ENCODE measurements at regions of chr1 and their contacts with region 1.

Region 1: GRCh38 chr1:225474986-225475820 is 47.4 kb upstream of the LBR start:
- ATAC-seq: peak; percentile 81 to 92 (median 89)
- H3K4me3 ChIP-seq: no peak overlapping the region
- H3K27ac ChIP-seq: no peak overlapping the region
- H3K4me1 ChIP-seq: peaks cover 7 to 8% of the 10 kb centered on the region in 2 donors

Region 2: DNA sequence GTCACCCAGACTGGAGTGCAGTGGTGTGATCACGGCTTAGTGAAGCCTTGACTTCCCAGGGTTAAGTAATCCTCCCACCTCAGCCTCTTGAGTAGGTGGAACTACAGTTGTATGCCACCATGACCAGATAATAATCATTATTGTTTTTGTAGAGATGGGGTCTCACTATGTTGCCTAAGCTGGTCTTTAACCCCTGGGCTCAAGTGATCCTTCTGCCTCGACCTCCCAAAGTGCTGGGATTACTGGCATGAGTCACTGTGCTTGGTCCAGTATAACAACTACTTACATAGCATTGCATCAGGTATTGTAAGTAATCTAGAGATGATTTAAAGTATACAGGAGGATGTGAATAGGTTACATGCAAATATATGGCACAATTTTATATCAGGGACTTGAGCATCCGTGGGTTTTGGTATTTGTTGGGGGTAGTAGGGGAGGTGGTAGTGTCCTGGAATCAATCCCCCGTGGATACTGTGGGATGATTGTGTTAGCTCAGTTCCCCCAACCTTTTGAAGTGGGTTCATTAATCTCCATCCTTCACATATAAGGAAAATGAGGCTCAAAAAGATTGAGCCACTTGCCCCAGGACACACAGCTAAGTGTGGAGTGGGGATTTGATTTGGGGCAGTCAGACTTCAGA is 920.5 kb before region 1 on chr1:
- in situ Hi-C with region 1: no loop called
- ATAC-seq: peak in 3 of 8 experiments; percentile 29 to 74 (median 39)
- H3K4me3 ChIP-seq: no peak overlapping the region
- H3K27ac ChIP-seq: no peak overlapping the region
- H3K4me1 ChIP-seq: peaks cover 5 to 8% of the 10 kb centered on the region in 2 donors

Region 3: GRCh38 chr1:225766967-225767633 is 291.9 kb after region 1 on chr1:
- in situ Hi-C with region 1: loop called in 8 of 9 experiments (anchors 5 to 25 kb)
- ATAC-seq: peak in 3 of 8 experiments; percentile 70 to 87 (median 80)
- H3K4me3 ChIP-seq: no peak overlapping the region
- H3K27ac ChIP-seq: no peak overlapping the region
- H3K4me1 ChIP-seq: peaks cover 9 to 19% of the 10 kb centered on the region in 2 donors

Region 4: GRCh38 chr1:225772323-225772768 is 297.1 kb after region 1 on chr1:
- in situ Hi-C with region 1: loop called in 8 of 9 experiments (anchors 5 to 25 kb)
- ATAC-seq: peak; percentile 91 to 96 (median 94)
- H3K4me3 ChIP-seq: no peak overlapping the region
- H3K27ac ChIP-seq: no peak overlapping the region
- H3K4me1 ChIP-seq: peaks cover 14 to 20% of the 10 kb centered on the region in 2 donors

Region 5: GRCh38 chr1:225777583-225778336 is 302.6 kb after region 1 on chr1 and contains the start of gene SRP9:
- in situ Hi-C with region 1: loop called in 7 of 9 experiments (anchors 5 to 25 kb)
- ATAC-seq: peak; percentile 97 to 100 (median 99)
- H3K4me3 ChIP-seq: peak within 1 kb of the TSS; percentile 57 to 96 (median 89)
- H3K27ac ChIP-seq: peak within 1 kb of the TSS; percentile 97 to 100
- H3K4me1 ChIP-seq: peaks cover 19 to 25% of the 10 kb centered on the region in 2 donors
- total RNA-seq, gene SRP9: 137 to 674 (median 404) TPM

Region 6: DNA sequence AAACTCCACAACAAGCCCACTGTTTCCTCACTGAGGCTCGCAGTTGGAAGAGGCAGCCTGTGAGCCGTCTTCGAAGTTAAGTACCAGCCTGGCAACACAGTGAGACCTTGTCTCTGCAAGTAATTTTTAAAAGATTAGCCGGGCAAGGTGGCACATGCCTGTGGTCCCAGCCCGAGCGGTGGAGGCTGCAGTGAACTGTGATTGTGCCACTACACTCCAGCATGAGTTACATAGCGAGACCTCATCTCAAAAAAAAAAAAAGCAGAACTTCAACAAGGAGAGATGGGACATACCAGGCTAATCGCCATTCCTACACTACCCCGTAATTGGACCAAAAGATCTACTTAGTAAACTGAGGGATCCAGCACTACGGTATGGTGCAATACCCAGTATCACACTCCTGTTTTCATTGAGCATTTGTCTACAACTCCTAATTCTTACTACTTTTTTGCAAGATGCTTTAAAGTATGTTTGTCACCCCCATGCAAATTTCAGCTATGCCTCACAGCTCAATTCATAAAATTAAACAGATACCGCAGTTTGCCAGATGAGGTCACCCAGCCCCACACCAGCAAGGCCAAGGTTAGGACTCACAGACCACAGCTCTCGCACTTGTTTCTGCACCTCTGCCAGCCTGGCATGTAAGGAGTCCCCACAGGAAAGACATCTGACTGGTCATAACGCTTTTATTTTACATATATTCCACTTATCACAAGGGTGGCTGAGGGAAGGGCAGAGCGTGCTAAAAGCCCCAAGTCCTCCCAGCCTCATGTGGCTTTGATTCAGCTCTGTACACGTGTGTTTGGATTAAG is 502.9 kb after region 1 on chr1:
- in situ Hi-C with region 1: loop called (anchors 10 to 25 kb)
- ATAC-seq: no peak
- H3K4me3 ChIP-seq: no peak overlapping the region
- H3K27ac ChIP-seq: no peak overlapping the region
- H3K4me1 ChIP-seq: peaks cover 0 to 2% of the 10 kb centered on the region in 2 donors

Region 7: GRCh38 chr1:225987491-225988316 is 512.5 kb after region 1 on chr1:
- in situ Hi-C with region 1: loop called in 6 of 9 experiments (anchors 10 to 25 kb)
- ATAC-seq: peak in 3 of 8 experiments; percentile 27 to 53 (median 45)
- H3K4me3 ChIP-seq: no peak overlapping the region
- H3K27ac ChIP-seq: no peak overlapping the region
- H3K4me1 ChIP-seq: no peaks in the 10 kb centered on the region

Region 8: DNA sequence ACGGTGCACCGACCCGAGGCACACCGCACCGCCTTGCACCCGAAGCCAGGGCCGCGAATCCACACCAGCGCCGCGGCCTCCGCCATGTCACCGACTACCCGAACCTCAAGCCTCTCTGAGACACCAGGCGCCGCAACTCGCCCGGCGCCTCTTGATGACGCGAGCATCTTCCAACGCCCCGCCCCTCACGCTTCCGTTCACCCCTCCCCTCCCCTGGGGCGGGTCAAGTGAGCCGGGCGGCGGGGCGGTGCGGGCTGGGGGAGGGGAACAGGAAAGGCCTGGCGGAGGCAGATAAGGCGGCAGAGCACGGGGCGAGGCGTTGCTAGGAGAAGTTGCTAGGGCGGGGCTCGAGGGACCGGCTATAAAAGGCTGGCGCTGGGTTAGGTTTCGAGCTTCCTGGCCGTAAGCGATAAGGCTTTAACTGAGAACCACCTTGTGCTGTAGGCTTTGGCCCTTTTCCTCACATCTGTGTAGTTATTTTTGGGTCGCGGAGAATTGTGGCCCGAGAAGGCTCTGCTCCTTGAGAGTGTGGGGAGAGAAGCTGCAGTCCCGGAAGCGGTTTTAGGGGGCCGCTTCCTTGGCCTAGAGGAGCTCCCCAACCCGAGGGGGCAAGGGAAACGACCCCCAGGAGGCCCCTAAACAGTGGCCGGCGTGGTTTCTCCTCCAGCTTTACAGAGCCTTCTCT is 524.2 kb after region 1 on chr1 and contains the start of gene SDE2:
- in situ Hi-C with region 1: loop called in 3 of 9 experiments (anchors 25 kb)
- ATAC-seq: peak; percentile 57 to 94 (median 86)
- H3K4me3 ChIP-seq: peak within 1 kb of the TSS; percentile 63 to 78 (median 67)
- H3K27ac ChIP-seq: peak within 1 kb of the TSS; percentile 84 to 92
- H3K4me1 ChIP-seq: peaks cover 27 to 38% of the 10 kb centered on the region in 2 donors
- total RNA-seq, gene SDE2: 21.7 to 30.9 (median 27.4) TPM

Region 9: GRCh38 chr1:226403201-226404034 is 928.2 kb after region 1 on chr1:
- in situ Hi-C with region 1: no loop called
- ATAC-seq: peak in 3 of 8 experiments; percentile 4 to 11 (median 10)
- H3K4me3 ChIP-seq: no peak overlapping the region
- H3K27ac ChIP-seq: no peak overlapping the region
- H3K4me1 ChIP-seq: peaks cover 40 to 42% of the 10 kb centered on the region in 2 donors

Measured in motor neuron (in vitro differentiated cells).